Ovary (tissue), 10 donors: ENCODE measurements at regions of chr1 and their contacts with region 1.

Region 1: DNA sequence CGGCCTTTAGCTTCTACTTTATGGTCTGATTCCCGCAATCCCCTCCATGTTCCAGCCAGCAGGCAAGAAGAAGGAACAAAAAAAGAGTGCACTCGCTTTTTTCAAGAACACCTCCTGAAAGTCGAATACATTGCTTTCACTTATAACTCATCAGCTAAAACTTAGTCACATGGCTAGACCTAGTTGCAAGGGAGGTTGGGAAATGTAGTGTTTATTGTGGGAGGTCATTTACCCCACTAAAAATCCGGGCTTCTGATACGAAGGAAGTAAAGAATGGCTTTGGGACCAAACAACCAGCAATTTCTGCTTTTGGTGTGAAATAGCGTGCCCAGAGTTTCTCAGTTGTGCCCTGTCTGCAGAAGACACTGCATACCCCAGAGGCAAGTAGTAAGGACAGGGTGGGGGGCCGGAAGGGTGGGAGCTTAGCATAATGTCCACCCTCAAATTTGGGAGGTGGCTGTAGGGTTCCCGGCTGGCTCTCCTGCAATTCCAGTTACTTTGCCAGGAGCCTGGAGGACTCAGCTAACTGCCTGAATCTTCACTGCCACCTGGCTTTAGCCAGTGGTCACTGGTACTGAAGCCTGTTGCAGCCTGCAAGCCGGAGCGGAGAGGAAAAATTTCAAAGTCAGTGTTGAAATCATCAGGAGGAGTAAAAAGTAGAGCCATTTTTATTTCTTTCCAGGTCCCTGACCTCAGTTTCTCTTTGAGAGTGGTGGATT is 57.7 kb upstream of the F3 start:
- DNase-seq: peak; percentile 37 to 73 (median 67)
- H3K4me3 ChIP-seq: no peak overlapping the region
- H3K27ac ChIP-seq: no peak overlapping the region
- H3K4me1 ChIP-seq: peaks cover 1% of the 10 kb centered on the region
- H3K27me3 ChIP-seq: no peaks in the 10 kb centered on the region
- CTCF ChIP-seq: peak in 1 of 3 donors; percentile 47
- EP300 ChIP-seq: no peak
- POLR2A ChIP-seq: no peak

Region 2: GRCh38 chr1:94532077-94532476 is 67.2 kb before region 1 on chr1:
- intact Hi-C with region 1: loop called in 2 of 4 experiments (anchors 5 kb)
- DNase-seq: no peak
- H3K4me3 ChIP-seq: no peak overlapping the region
- H3K27ac ChIP-seq: no peak overlapping the region
- H3K4me1 ChIP-seq: peaks cover 2% of the 10 kb centered on the region
- H3K27me3 ChIP-seq: no peaks in the 10 kb centered on the region
- CTCF ChIP-seq: no peak
- EP300 ChIP-seq: no peak
- POLR2A ChIP-seq: no peak

Region 3: DNA sequence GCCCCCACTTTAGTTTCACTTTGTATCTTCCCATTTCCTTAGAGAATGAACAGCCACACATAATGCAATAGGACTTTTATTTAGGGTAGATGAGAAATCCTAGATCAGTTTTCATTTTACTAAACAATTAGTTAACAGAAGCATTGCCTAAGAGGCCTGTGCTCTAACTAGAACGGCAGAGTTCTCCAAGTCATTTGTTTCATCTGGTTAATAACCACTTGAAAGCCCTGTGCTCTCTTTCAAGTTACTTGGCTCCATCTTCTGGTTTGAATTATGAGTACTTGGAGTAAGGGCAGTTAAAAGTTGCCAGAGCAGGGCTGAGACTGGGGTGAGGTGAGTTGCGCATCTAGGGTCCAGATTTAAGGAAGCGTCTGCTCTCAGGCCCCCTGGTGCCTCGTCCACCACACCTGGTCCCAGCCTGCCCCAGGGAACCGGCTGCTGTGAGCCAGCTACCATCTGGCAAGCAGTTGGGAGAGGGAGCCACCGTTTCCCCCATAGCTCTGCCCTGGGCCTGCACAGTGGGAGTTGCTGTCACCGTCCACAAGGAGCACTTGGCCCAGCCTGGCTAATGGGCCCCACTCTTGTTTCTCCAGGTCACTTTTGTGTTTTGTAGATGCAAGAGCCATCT is 202.8 kb after region 1 on chr1:
- intact Hi-C with region 1: loop called in 1 of 4 experiments (anchors 5 kb)
- DNase-seq: peak; percentile 42 to 61 (median 53)
- H3K4me3 ChIP-seq: peak overlapping the region; percentile 11
- H3K27ac ChIP-seq: peak overlapping the region; percentile 54 to 73
- H3K4me1 ChIP-seq: peaks cover 7% of the 10 kb centered on the region
- H3K27me3 ChIP-seq: no peaks in the 10 kb centered on the region
- CTCF ChIP-seq: peak; percentile 37 to 66 (median 41)
- EP300 ChIP-seq: no peak
- POLR2A ChIP-seq: no peak